ENCODE measurements at regions of chr1 and their contacts with region 1.

Region 1: GRCh38 chr1:52365746-52366516 is at the start of gene CC2D1B:
- H3K4me3 ChIP-seq: peak within 1 kb of the TSS; percentile 91
- H3K27ac ChIP-seq: peak within 1 kb of the TSS; percentile 91
- H3K4me1 ChIP-seq: peaks cover 7% of the 10 kb centered on the region; the same call in 1 of the 2 replicates
- CTCF ChIP-seq: peak; percentile 74

Region 2: GRCh38 chr1:52348704-52349300 is 17.1 kb before region 1 on chr1:
- CTCF ChIA-PET with region 1: interaction called, 4 read pairs
- POLR2A ChIA-PET with region 1: interaction called, 10 read pairs
- H3K4me3 ChIP-seq: no peak overlapping the region
- H3K27ac ChIP-seq: no peak overlapping the region
- H3K4me1 ChIP-seq: no peaks in the 10 kb centered on the region
- CTCF ChIP-seq: no peak

Region 3: GRCh38 chr1:52404116-52404986 is 38.4 kb after region 1 on chr1 and contains the starts of genes ORC1 and PRPF38A:
- CTCF ChIA-PET with region 1: no interaction called
- POLR2A ChIA-PET with region 1: interaction called, 11 read pairs
- H3K4me3 ChIP-seq: peak within 1 kb of the TSS; percentile 83
- H3K27ac ChIP-seq: peak within 1 kb of the TSS; percentile 68
- H3K4me1 ChIP-seq: no peaks in the 10 kb centered on the region
- CTCF ChIP-seq: peak; percentile 94

Measured in HEK293 (cell line).